Heart left ventricle (tissue), 16 donors: ENCODE measurements at regions of chr3 and their contacts with region 1.

Region 1: DNA sequence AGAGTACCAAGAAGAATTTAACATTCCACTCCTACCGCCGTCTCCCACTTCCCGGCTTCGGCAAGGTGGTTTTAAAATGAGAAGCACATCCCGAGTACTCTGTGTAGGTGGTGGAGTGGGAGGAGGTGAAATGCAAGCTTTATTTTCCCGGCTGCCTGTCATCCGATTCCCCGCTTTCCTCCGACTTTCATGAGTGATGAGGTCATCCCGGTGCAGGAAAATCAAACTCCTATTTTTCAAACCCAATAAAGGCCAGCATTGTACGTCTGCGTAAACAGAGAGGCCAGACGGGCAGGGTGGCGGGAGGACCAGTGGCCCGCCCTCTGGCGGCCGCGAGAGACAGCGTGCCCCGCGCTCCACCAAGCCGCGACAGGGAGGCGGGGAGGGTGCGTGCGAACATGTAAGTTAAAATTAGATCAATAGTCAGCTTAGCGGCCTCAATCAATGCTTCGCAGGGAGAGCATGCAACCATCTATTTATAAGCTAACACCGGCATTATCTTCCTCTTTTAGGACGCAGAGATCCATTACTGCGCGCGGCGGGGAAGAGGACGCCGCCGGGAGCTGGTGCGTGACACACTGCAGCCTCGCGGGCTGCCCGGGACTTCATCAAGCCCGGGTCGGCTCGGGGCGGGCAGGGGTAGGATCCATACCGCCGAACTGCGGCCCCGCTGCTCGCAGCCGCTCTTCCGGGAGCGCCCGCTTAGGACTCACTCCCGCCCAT is 163.3 kb downstream of the CD47 start:
- DNase-seq: peak; percentile 59 to 84 (median 65)
- ATAC-seq: peak; percentile 85 to 99 (median 97)
- H3K4me3 ChIP-seq: peak overlapping the region; percentile 35 to 78 (median 61)
- H3K27ac ChIP-seq: peak overlapping the region in 1 of 12 donors; percentile 29
- H3K4me1 ChIP-seq: peaks cover 0 to 18% (median 7%) of the 10 kb centered on the region in 12 donors
- H3K27me3 ChIP-seq: peaks cover 0 to 15% (median 0%) of the 10 kb centered on the region in 9 donors
- CTCF ChIP-seq: peak; percentile 82 to 97 (median 93)
- POLR2A ChIP-seq: no peak

Region 2: GRCh38 chr3:107651782-107652181 is 275.7 kb before region 1 on chr3:
- intact Hi-C with region 1: loop called in 1 of 10 experiments (anchors 10 kb)
- DNase-seq: no peak
- ATAC-seq: no peak
- H3K4me3 ChIP-seq: no peak overlapping the region
- H3K27ac ChIP-seq: no peak overlapping the region
- H3K4me1 ChIP-seq: peaks cover 0 to 7% (median 0%) of the 10 kb centered on the region in 12 donors
- H3K27me3 ChIP-seq: no peaks in the 10 kb centered on the region
- CTCF ChIP-seq: no peak
- POLR2A ChIP-seq: no peak

Region 3: GRCh38 chr3:107660306-107660976 is 267.1 kb before region 1 on chr3:
- intact Hi-C with region 1: loop called in 2 of 10 experiments (anchors 10 kb)
- DNase-seq: no peak
- ATAC-seq: peak in 1 of 4 donors; percentile 38
- H3K4me3 ChIP-seq: no peak overlapping the region
- H3K27ac ChIP-seq: no peak overlapping the region
- H3K4me1 ChIP-seq: peaks cover 0 to 37% (median 27%) of the 10 kb centered on the region in 12 donors
- H3K27me3 ChIP-seq: no peaks in the 10 kb centered on the region
- CTCF ChIP-seq: peak; percentile 33 to 71 (median 62)
- POLR2A ChIP-seq: no peak

Region 4: DNA sequence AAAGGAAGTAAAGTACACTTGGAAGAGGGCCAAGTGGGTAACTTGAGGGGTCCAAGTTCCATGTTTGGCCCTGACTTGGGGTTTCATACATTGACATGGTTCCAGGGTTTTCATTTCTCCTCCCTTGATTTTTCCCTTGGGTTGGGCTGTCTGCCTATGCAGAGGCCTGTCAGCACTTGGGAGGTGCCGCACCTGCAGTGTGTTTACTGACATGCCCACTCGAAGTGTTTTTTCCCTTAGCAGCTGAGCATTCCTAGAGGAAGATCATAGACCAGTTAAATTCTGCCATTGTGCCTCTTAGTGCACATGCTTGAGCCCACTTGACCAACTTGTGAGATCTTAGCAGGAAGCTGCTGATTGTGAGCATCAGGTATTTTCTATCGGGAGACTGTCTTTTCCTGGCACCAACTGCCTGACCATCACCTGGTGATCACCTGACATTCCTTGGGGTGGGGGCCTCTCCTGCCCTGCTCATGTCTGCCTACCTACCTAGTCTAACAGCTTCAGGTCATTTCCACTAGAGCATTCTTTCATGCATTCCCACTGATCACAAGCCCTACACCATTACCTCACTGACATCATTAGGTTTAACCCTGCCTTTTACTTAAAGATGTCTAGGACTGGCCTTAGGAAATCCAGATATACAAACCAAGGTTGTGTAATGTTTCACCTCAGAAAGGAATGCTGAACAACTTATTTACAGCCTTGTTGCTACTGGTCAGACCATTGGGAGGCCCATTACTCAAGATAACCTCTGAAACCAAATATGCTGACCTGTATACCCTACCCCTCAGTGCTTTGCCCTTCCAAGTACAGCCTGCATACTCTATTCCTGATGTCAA is 95.0 kb after region 1 on chr3:
- intact Hi-C with region 1: no loop called
- DNase-seq: no peak
- ATAC-seq: peak in 1 of 4 donors; percentile 41
- H3K4me3 ChIP-seq: no peak overlapping the region
- H3K27ac ChIP-seq: no peak overlapping the region
- H3K4me1 ChIP-seq: peaks cover 0 to 10% (median 0%) of the 10 kb centered on the region in 12 donors
- H3K27me3 ChIP-seq: no peaks in the 10 kb centered on the region
- CTCF ChIP-seq: no peak
- POLR2A ChIP-seq: no peak